ENCODE measurements at regions of chr17 and their contacts with region 1.

Region 1: GRCh38 chr17:82613355-82614235 is 34.6 kb downstream of the WDR45B start:
- DNase-seq: no peak
- H3K4me3 ChIP-seq: no peak overlapping the region
- H3K27ac ChIP-seq: peak overlapping the region in 1 of 2 donors; percentile 36
- H3K4me1 ChIP-seq: no peaks in the 10 kb centered on the region
- H3K27me3 ChIP-seq: no peaks in the 10 kb centered on the region
- CTCF ChIP-seq: no peak
- POLR2A ChIP-seq: no peak

Region 2: GRCh38 chr17:82598256-82599119 is 15.1 kb before region 1 on chr17:
- intact Hi-C with region 1: loop called (anchors 2 kb)
- DNase-seq: no peak
- H3K4me3 ChIP-seq: no peak overlapping the region
- H3K27ac ChIP-seq: peak overlapping the region in 1 of 2 donors; percentile 19
- H3K4me1 ChIP-seq: peaks cover 0 to 5% of the 10 kb centered on the region in 2 donors
- H3K27me3 ChIP-seq: no peaks in the 10 kb centered on the region
- CTCF ChIP-seq: no peak
- POLR2A ChIP-seq: no peak

Region 3: DNA sequence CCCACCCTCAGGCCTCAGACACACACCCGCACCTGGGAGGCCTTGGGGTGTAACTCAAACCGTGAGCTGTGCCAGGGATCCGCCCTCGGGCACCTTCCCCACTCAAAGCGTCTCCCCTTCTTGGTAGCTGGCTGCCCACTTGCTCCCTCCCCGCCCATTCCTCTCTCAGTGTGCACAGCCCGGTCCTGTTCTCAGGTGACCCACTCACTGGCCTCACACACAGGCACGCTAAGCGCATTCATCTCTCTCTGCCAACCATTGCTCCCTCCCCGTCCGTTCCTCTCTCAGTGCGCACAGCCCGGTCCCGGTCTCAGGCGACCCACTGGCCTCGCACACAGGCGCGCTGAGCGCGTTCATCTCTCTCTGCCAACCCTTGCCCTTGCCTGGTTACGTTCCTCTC is 13.8 kb after region 1 on chr17:
- intact Hi-C with region 1: no loop called
- DNase-seq: no peak
- H3K4me3 ChIP-seq: no peak overlapping the region
- H3K27ac ChIP-seq: peak overlapping the region; percentile 33 to 57
- H3K4me1 ChIP-seq: no peaks in the 10 kb centered on the region
- H3K27me3 ChIP-seq: no peaks in the 10 kb centered on the region
- CTCF ChIP-seq: no peak
- POLR2A ChIP-seq: no peak

Region 4: DNA sequence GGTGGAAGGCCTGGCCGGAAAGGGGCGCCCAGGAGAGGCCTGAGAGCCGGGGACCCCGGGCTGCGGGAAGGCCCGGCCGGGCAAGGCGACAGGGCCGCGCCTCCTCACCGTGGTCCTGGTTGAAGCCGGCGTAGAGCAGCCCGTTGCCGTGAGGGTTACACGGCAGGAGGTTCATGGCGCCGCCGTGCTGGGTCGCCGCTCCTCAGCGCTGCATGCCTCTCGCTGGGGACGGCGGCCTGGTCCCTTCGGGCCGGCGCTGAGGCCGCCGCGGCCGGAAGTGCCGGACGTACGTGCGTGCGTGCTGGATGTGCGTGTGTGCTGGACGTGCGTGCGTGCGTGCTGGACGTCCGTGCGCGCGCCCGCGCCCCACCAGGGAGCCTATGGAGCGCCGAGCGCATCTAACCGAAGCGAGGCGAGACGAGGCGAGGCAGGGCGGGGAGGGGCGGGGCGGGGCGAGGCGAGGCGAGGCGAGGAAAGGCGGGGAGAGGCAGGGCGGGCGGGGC is 34.6 kb after region 1 on chr17 and contains the start of gene WDR45B:
- intact Hi-C with region 1: loop called (anchors 1 kb)
- DNase-seq: peak; percentile 90 to 93
- H3K4me3 ChIP-seq: peak within 1 kb of the TSS; percentile 90 to 100 (median 99)
- H3K27ac ChIP-seq: peak within 1 kb of the TSS; percentile 98 to 99
- H3K4me1 ChIP-seq: peaks cover 5 to 7% of the 10 kb centered on the region in 2 donors
- H3K27me3 ChIP-seq: no peaks in the 10 kb centered on the region
- CTCF ChIP-seq: no peak
- POLR2A ChIP-seq: peak; percentile 89
- total RNA-seq, gene WDR45B: 74.2 to 118 (median 83.9) TPM

Region 5: DNA sequence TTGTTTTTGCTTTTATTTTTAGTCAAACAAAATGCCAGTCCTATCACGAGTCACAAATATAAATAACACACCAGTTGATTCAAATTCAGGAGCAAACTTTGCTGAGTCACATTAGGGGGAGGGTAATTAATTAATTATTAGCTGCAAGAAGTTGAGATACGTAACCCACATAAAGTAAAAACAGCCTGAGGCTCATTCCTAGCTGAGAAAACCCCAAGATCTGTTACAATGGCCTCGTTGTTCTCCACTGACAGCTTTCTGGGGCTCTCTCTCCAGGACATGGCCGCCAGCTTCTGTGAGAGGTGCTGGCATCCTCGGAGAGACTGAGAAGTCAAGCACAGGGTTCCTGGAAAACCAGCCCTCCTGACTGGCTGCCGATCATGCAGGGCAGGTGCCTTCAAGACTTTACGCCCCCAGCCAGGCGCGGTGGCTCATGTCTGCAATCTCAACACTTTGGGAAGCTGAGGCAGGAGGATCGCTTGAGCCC is 73.8 kb after region 1 on chr17:
- intact Hi-C with region 1: no loop called
- DNase-seq: peak in 1 of 2 donors; percentile 92
- H3K4me3 ChIP-seq: peak overlapping the region in 2 of 3 donors; percentile 11 to 34
- H3K27ac ChIP-seq: peak overlapping the region; percentile 92 to 95
- H3K4me1 ChIP-seq: no peaks in the 10 kb centered on the region
- H3K27me3 ChIP-seq: no peaks in the 10 kb centered on the region
- CTCF ChIP-seq: no peak
- POLR2A ChIP-seq: no peak

Measured in breast epithelium (tissue), 4 donors.